Endothelial cell of umbilical vein (primary cell): ENCODE measurements at regions of chr3 and their contacts with region 1.

Region 1: DNA sequence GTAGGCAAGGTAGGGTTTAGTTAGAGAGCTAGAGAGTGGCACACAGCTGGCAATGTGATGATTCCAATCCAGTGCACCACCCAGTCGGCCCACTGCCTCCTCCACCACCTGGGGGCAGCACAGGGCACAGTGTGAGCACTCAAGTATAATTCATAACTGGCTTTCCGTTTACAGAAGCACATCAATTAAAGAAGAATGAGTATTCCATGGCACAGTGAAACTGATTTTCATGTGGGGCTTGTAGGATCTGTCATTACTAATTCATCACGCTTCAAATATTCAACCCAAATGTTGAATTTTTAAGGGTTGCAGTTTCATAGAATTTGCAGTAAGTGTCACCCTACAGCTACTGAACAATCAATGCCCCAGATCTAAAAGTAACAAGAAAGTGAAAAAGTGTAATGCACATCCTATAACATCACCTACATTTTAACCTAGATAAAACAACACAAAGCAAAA is 149.9 kb downstream of the IGSF11 start:
- DNase-seq: peak; percentile 52
- H3K4me3 ChIP-seq: no peak overlapping the region
- H3K27ac ChIP-seq: no peak overlapping the region
- H3K4me1 ChIP-seq: no peaks in the 10 kb centered on the region
- H3K27me3 ChIP-seq: no peaks in the 10 kb centered on the region
- CTCF ChIP-seq: peak; percentile 77 to 88
- POLR2A ChIP-seq: no peak

Region 2: DNA sequence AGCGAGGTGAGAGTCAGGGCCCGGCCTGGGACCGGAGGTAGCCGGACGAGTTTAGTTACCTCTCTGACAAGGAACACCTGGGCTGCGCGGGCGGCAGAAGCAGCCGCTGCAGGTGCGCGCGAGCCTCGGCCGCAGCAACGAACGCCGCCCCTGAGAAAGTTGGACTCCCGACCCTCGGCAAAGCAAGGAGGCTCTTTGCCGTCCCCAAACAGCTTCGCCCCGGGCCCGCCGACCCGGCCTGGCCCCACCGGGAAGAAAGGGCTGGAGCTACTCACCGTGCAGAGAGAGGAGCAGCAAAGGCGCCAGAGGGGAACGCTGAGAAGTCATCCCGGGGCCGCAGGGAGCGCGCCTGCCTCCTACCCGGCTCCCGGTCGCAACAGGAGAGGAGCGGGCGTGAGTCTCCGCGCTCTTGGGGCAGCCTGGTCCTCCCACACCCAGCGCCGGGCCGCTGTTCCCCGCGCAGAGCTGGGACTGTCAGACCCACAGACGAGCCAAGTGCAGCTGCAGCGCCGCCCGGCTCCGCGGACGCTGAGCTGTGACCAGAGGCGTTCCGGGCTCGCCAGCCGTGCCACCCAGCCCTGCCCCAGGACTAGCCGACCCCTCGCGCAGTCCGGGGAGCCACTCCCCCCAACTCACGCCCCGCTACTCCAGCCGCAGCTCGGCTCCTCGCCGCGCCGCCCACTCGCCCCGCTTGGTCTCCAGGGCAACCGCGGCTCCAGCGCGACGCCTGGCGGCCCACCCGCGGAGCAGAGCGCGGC is 149.7 kb after region 1 on chr3 and contains the start of gene IGSF11:
- CTCF ChIA-PET with region 1: interaction called, 91 read pairs
- POLR2A ChIA-PET with region 1: no interaction called
- dilution Hi-C with region 1: no loop called
- intact Hi-C with region 1: loop called (anchors 1 kb)
- DNase-seq: peak; percentile 61
- H3K4me3 ChIP-seq: peak within 1 kb of the TSS in 2 of 3 experiments; percentile 21 to 45
- H3K27ac ChIP-seq: no peak within 1 kb of the TSS
- H3K4me1 ChIP-seq: no peaks in the 10 kb centered on the region
- H3K27me3 ChIP-seq: peaks cover 28 to 46% of the 10 kb centered on the region in 2 experiments
- CTCF ChIP-seq: peak; percentile 51 to 54
- POLR2A ChIP-seq: no peak
- total RNA-seq, gene IGSF11: not detected in 2 replicates

Region 3: DNA sequence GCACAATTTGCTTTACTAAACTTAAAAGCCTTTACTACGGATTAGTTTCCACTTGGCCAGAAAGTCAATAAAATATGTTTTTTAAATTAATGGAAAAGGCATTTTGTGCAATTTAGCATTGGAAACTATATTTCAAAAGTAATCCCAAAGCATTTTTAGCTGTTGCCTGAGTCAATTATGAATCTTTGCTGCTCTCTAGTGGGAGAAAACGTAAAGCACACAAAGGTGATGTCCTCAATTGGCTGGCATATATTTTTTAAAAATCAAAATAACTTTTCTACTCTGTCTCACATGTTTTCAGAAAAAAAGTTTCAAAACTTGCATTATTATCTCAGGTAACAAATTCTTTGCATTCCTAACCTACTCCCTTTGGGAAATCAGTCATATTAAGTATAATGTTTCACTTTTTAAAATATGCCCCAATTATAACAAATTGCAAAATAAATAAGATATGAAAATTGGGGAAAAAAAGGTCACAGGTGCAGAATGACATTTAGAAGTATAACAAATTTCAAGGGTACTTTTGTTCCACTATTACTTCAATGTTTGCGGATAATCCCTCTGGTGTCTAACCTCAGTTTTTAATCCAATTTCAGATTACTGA is 213.9 kb after region 1 on chr3:
- CTCF ChIA-PET with region 1: interaction called, 331 read pairs
- POLR2A ChIA-PET with region 1: no interaction called
- dilution Hi-C with region 1: no loop called
- intact Hi-C with region 1: loop called (anchors 1 kb)
- DNase-seq: peak; percentile 40
- H3K4me3 ChIP-seq: no peak overlapping the region
- H3K27ac ChIP-seq: no peak overlapping the region
- H3K4me1 ChIP-seq: no peaks in the 10 kb centered on the region
- H3K27me3 ChIP-seq: no peaks in the 10 kb centered on the region
- CTCF ChIP-seq: peak; percentile 27 to 43
- POLR2A ChIP-seq: no peak

Region 4: DNA sequence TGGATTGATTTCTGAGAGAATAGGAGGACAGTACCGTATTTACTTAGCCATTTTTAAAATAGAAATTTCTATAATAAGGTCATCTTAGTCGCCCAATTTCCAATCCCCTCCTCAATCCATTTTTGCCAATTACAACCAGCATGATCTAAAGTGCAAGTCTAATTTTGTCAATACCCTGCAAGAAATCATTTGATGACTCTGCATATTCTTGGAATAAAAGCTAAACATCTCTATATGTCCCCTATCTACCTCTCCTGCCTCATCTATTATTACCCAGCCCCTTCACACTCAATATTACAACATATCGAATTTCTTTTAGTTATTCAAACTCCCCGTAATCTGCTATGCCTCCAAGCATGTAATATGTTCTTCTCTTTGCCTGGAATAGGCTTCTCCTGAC is 219.3 kb after region 1 on chr3:
- CTCF ChIA-PET with region 1: interaction called, 331 read pairs
- POLR2A ChIA-PET with region 1: no interaction called
- dilution Hi-C with region 1: no loop called
- intact Hi-C with region 1: no loop called
- DNase-seq: no peak
- H3K4me3 ChIP-seq: no peak overlapping the region
- H3K27ac ChIP-seq: no peak overlapping the region
- H3K4me1 ChIP-seq: no peaks in the 10 kb centered on the region
- H3K27me3 ChIP-seq: no peaks in the 10 kb centered on the region
- CTCF ChIP-seq: no peak
- POLR2A ChIP-seq: no peak

Region 5: DNA sequence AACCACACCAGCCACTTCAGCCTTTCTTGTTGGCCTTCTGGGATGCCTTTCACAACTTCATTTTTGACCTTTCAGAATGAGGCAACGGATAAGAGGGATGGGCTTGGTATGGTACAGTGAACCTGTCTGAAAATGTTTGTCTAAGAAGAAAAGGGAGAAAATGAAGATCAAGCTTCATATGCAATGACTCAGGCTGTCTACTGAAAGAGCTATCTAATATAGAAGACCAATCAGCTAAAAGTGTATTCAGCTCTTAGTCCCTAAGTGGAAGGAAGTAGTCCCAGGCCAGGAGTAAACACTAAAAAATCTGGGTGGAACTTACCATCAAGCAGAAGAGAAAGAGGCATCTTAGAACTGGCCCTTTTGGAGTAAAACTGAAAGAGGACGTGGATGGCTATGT is 276.5 kb after region 1 on chr3:
- CTCF ChIA-PET with region 1: no interaction called
- POLR2A ChIA-PET with region 1: no interaction called
- dilution Hi-C with region 1: no loop called
- intact Hi-C with region 1: no loop called
- DNase-seq: no peak
- H3K4me3 ChIP-seq: no peak overlapping the region
- H3K27ac ChIP-seq: no peak overlapping the region
- H3K4me1 ChIP-seq: no peaks in the 10 kb centered on the region
- H3K27me3 ChIP-seq: no peaks in the 10 kb centered on the region
- CTCF ChIP-seq: no peak
- POLR2A ChIP-seq: no peak

Region 6: GRCh38 chr3:119293871-119294695 is 409.3 kb after region 1 on chr3 and contains the start of gene ARHGAP31:
- CTCF ChIA-PET with region 1: no interaction called
- POLR2A ChIA-PET with region 1: no interaction called
- dilution Hi-C with region 1: no loop called
- intact Hi-C with region 1: loop called (anchors 5 kb)
- DNase-seq: peak; percentile 90
- H3K4me3 ChIP-seq: peak within 1 kb of the TSS; percentile 84 to 92 (median 86)
- H3K27ac ChIP-seq: peak within 1 kb of the TSS; percentile 78
- H3K4me1 ChIP-seq: peaks cover 32% of the 10 kb centered on the region
- H3K27me3 ChIP-seq: no peaks in the 10 kb centered on the region
- CTCF ChIP-seq: no peak
- POLR2A ChIP-seq: peak; percentile 77
- total RNA-seq, gene ARHGAP31: 64.8 and 65.8 TPM in 2 replicates

Region 7: DNA sequence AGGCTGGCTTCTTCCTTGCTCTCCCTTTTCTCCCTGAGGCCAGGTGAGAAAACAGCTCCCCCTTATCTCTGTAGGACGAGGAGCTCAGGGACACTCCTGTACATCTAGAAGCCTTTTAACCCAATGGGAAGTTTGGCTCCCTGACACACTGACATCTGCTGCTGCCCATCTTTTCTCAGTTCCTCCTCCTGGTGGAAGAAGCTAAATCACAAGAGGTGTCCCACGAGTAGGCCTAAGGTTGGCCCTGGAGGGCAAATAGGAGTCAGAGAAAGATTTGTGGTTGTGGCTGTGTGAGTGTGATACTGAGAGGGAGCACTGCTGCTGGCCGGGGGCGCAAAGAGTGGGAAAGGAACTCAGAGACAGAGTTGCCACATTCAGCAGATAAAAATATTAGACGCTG is 458.9 kb after region 1 on chr3:
- CTCF ChIA-PET with region 1: no interaction called
- POLR2A ChIA-PET with region 1: no interaction called
- dilution Hi-C with region 1: no loop called
- intact Hi-C with region 1: loop called (anchors 10 kb)
- DNase-seq: no peak
- H3K4me3 ChIP-seq: no peak overlapping the region
- H3K27ac ChIP-seq: no peak overlapping the region
- H3K4me1 ChIP-seq: peaks cover 8% of the 10 kb centered on the region
- H3K27me3 ChIP-seq: no peaks in the 10 kb centered on the region
- CTCF ChIP-seq: no peak
- POLR2A ChIP-seq: no peak